ENCODE measurements at regions of chr5 and their contacts with region 1.

Region 1: DNA sequence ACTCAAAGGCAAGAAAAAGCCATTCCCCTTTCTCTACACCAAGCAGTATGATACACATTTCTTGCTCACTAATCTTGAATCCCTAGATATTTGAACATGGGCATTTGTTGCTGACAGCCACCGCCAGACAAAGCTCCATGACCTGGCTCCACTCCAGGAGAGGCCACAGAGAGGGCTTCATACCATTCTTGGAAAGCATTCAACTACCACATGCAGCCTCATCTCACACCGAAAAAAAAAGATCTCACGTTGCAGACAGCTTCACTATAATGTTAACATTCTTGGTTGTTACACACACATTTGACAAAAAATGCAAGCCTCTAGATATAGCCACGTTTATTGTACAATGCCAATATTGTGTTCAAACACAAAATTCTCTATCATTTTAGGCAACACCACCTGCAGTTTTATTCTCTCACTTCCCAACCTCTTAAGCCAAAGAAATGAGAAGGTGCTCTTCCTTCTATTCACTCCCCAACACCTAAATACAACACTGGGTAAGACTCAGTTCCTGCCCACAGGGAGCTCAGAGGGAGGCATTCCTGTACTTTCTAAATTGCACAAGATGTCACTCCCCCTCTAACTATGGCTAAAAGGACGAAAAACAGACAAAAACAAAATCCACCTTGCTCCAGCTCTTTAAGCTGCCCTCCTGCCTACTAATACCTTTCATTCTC is 222.4 kb downstream of the TSSK1B start:
- DNase-seq: peak; percentile 43 to 64
- ATAC-seq: peak in 5 of 8 donors; percentile 18 to 74 (median 61)
- H3K4me3 ChIP-seq: no peak overlapping the region
- H3K27ac ChIP-seq: peak overlapping the region in 3 of 10 donors; percentile 13 to 46 (median 24)
- H3K4me1 ChIP-seq: peaks cover 7 to 88% (median 58%) of the 10 kb centered on the region in 9 donors
- H3K27me3 ChIP-seq: no peaks in the 10 kb centered on the region
- CTCF ChIP-seq: no peak

Region 2: DNA sequence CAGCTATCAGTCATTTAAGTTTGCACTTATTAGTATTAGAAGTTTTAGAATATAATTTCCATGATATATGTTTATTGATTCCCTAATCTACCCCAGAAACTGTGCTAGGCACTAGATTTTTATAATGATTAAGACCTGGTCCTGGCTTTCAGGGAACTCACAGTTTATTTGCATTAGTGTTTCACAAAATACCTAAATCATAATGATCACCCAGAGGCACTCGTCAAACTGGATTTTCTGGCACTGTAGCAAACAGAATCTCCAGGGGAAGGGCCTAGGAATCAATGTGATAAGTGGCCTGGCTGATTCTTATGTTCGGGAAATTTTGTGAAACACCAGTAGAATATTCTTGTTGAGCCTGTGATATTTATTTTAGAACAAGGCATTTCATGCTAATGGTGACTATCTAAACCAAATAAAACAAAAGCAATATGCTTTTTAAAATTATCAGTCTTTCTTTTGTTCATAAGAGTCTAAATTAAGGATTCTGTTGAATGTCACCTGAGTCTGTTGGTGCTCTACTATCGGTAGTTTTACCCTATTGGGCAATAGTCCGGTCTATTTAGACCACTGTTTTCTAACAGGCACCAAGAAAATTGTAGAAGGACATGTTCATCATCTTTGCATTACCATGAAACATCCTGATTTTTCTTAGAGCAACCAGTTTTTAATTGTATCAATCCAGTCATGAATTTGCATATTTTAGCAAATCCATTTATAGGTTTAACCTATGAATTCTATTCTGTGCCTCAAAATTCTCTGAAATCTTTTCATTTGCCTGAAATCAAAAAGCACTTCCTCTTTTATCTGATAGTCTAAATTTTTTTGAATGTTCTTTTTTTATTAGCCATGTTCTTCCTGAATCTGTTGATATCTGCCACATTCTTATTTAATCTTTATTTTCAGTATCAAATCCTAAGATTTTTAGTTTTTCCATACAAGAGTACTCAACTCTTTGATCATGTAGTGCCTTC is 388.5 kb before region 1 on chr5:
- intact Hi-C with region 1: no loop called
- DNase-seq: no peak
- ATAC-seq: no peak
- H3K4me3 ChIP-seq: no peak overlapping the region
- H3K27ac ChIP-seq: no peak overlapping the region
- H3K4me1 ChIP-seq: no peaks in the 10 kb centered on the region
- H3K27me3 ChIP-seq: no peaks in the 10 kb centered on the region
- CTCF ChIP-seq: no peak

Region 3: DNA sequence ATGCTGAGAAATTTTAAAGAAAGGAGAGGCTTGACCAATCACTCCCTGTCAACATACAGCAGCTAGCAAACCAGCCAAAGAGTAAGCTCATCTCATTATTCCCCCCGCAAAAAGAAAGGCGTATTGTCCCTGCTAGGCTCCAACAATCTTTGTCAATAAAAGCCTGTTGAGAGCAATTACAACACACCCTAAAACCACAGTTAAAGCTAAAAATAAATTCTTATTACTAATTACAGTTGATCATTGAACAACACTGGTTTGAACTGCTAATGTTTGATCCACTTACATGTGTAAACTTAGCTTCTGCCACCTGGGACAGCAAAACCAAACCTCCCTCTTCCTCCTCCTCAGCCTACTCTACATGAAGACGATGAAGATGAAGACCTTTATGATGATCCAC is 71.2 kb after region 1 on chr5:
- intact Hi-C with region 1: loop called in 1 of 10 experiments (anchors 5 kb)
- DNase-seq: no peak
- ATAC-seq: no peak
- H3K4me3 ChIP-seq: no peak overlapping the region
- H3K27ac ChIP-seq: no peak overlapping the region
- H3K4me1 ChIP-seq: peaks cover 8 to 82% (median 48%) of the 10 kb centered on the region in 9 donors
- H3K27me3 ChIP-seq: no peaks in the 10 kb centered on the region
- CTCF ChIP-seq: no peak